Gastrocnemius medialis (tissue), 4 donors: ENCODE measurements at regions of chr4 and their contacts with region 1.

Region 1: GRCh38 chr4:122758033-122758432 is 25.5 kb downstream of the BBS12 start:
- DNase-seq: no peak
- ATAC-seq: no peak
- H3K4me3 ChIP-seq: no peak overlapping the region
- H3K27ac ChIP-seq: no peak overlapping the region
- H3K4me1 ChIP-seq: peaks cover 0 to 2% of the 10 kb centered on the region in 2 donors
- H3K27me3 ChIP-seq: no peaks in the 10 kb centered on the region
- CTCF ChIP-seq: peak; percentile 27 to 79 (median 56)
- POLR2A ChIP-seq: no peak

Region 2: DNA sequence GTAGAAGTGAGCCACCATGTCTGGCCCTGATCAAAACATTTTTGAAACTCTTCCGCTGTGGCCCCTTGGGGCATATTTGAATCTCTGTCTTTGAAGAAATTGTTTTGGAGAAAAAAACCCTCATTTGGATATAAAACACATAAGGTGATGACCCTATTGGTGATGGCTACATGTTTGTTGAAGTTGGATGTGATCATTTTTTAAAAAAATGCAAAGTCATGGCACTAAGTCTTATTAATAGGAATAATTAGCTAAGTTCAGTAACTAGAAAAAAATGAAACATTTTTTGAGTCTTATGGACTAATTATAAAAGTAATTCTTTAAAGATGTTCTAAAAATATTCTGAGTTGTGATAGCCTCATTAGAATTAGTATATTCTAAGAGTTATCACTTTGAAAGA is 869.9 kb before region 1 on chr4:
- in situ Hi-C with region 1: no loop called
- intact Hi-C with region 1: no loop called
- DNase-seq: no peak
- ATAC-seq: no peak
- H3K4me3 ChIP-seq: no peak overlapping the region
- H3K27ac ChIP-seq: no peak overlapping the region
- H3K4me1 ChIP-seq: no peaks in the 10 kb centered on the region
- H3K27me3 ChIP-seq: no peaks in the 10 kb centered on the region
- CTCF ChIP-seq: no peak
- POLR2A ChIP-seq: no peak

Region 3: GRCh38 chr4:122914292-122914904 is 156.4 kb after region 1 on chr4:
- in situ Hi-C with region 1: loop called in 1 of 4 experiments (anchors 10 kb)
- intact Hi-C with region 1: no loop called
- DNase-seq: no peak
- ATAC-seq: no peak
- H3K4me3 ChIP-seq: no peak overlapping the region
- H3K27ac ChIP-seq: no peak overlapping the region
- H3K4me1 ChIP-seq: no peaks in the 10 kb centered on the region
- H3K27me3 ChIP-seq: no peaks in the 10 kb centered on the region
- CTCF ChIP-seq: peak in 2 of 5 experiments; percentile 10 to 24
- POLR2A ChIP-seq: no peak

Region 4: DNA sequence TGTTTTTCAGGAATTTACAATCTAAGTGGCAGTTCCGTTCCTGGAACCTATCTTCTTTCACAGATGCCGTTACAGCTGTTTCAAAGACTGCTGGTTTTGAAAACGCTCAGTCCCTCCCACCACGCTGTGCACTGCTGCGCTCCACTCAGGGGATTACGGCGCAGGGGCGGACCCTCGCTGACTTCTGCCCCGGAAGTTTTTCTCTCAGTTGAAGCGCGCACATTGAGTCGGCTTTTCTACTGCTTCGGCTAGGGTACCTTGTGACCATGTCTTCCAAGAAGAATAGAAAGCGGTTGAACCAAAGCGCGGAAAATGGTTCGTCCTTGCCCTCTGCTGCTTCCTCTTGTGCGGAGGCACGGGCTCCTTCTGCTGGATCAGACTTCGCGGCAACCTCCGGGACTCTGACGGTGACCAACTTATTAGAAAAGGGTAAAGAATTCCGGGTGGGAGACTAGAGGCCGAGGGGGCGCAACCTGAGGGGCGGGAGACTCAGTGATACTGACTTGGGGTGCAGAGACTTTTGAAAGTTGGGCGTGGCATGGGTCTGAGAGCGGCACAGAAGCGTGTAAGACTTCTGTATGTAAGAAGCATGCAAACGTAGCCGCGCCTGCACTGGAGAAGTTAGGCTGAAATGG is 165.0 kb after region 1 on chr4:
- in situ Hi-C with region 1: loop called (anchors 5 to 10 kb)
- intact Hi-C with region 1: no loop called
- DNase-seq: peak; percentile 68 to 69
- ATAC-seq: peak; percentile 91 to 95
- H3K4me3 ChIP-seq: peak overlapping the region; percentile 86 to 94 (median 92)
- H3K27ac ChIP-seq: peak overlapping the region; percentile 77 to 83 (median 81)
- H3K4me1 ChIP-seq: peaks cover 13 to 24% of the 10 kb centered on the region in 2 donors
- H3K27me3 ChIP-seq: no peaks in the 10 kb centered on the region
- CTCF ChIP-seq: no peak
- POLR2A ChIP-seq: no peak

Region 5: DNA sequence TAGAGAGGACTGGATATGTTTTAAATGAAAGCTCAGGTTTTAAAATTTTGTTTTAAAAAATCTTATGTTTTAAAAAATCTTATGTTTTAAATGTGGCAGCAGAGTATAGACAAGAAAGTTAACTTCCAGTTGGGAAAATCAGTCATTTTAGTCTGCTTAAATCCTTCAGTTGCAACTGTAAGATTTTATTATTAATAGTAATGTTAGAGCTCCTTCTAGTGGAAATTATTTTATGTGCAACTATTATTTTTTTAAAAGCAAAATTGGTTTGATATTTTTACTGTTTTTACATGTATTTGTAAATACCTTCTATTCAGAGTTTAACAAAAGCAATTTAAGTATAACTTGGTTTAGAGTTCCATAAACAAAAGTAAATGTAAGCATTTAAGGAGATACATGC is 172.8 kb after region 1 on chr4:
- in situ Hi-C with region 1: loop called in 3 of 4 experiments (anchors 5 to 10 kb)
- intact Hi-C with region 1: loop called (anchors 1 kb)
- DNase-seq: no peak
- ATAC-seq: no peak
- H3K4me3 ChIP-seq: no peak overlapping the region
- H3K27ac ChIP-seq: no peak overlapping the region
- H3K4me1 ChIP-seq: peaks cover 0 to 4% of the 10 kb centered on the region in 2 donors
- H3K27me3 ChIP-seq: no peaks in the 10 kb centered on the region
- CTCF ChIP-seq: peak in 4 of 5 experiments; percentile 18 to 65 (median 42)
- POLR2A ChIP-seq: no peak

Region 6: GRCh38 chr4:122946142-122946541 is 188.1 kb after region 1 on chr4:
- in situ Hi-C with region 1: no loop called
- intact Hi-C with region 1: no loop called
- DNase-seq: no peak
- ATAC-seq: no peak
- H3K4me3 ChIP-seq: no peak overlapping the region
- H3K27ac ChIP-seq: no peak overlapping the region
- H3K4me1 ChIP-seq: no peaks in the 10 kb centered on the region
- H3K27me3 ChIP-seq: no peaks in the 10 kb centered on the region
- CTCF ChIP-seq: no peak
- POLR2A ChIP-seq: no peak

Region 7: GRCh38 chr4:124262211-124263179 is 1504.5 kb after region 1 on chr4:
- in situ Hi-C with region 1: loop called in 1 of 4 experiments (anchors 25 kb)
- intact Hi-C with region 1: loop called (anchors 2 kb)
- DNase-seq: peak; percentile 28 to 41
- ATAC-seq: peak; percentile 73 to 78
- H3K4me3 ChIP-seq: no peak overlapping the region
- H3K27ac ChIP-seq: no peak overlapping the region
- H3K4me1 ChIP-seq: no peaks in the 10 kb centered on the region
- H3K27me3 ChIP-seq: no peaks in the 10 kb centered on the region
- CTCF ChIP-seq: peak; percentile 60 to 80 (median 77)
- POLR2A ChIP-seq: no peak